Activated CD8-positive, alpha-beta memory T cell treated with anti-CD3 and anti-CD28 coated beads, Interleukin-2, amount 10 ng/mL, durations not matched to agents 7 days and 5 days (primary cell): ENCODE measurements at regions of chr5 and their contacts with region 1.

Region 1: GRCh38 chr5:139765409-139766217 is 30.0 kb upstream of the PSD2 start:
- DNase-seq: peak; percentile 85
- ATAC-seq: peak; percentile 92
- H3K4me3 Mint-ChIP-seq: peak overlapping the region; percentile 67
- H3K27ac Mint-ChIP-seq: no peak overlapping the region
- H3K4me1 Mint-ChIP-seq: peaks cover 4% of the 10 kb centered on the region
- H3K27me3 Mint-ChIP-seq: peaks cover 34% of the 10 kb centered on the region

Region 2: GRCh38 chr5:139343476-139343875 is 422.1 kb before region 1 on chr5:
- CTCF ChIA-PET with region 1: no interaction called
- DNase-seq: peak; percentile 29
- ATAC-seq: no peak
- H3K4me3 Mint-ChIP-seq: peak overlapping the region; percentile 100
- H3K27ac Mint-ChIP-seq: peak overlapping the region; percentile 99
- H3K4me1 Mint-ChIP-seq: peaks cover 46% of the 10 kb centered on the region
- H3K27me3 Mint-ChIP-seq: no peaks in the 10 kb centered on the region

Region 3: GRCh38 chr5:139633295-139634027 is 132.2 kb before region 1 on chr5:
- CTCF ChIA-PET with region 1: interaction called, 185 read pairs
- DNase-seq: peak; percentile 78
- ATAC-seq: peak; percentile 40
- H3K4me3 Mint-ChIP-seq: no peak overlapping the region
- H3K27ac Mint-ChIP-seq: peak overlapping the region; percentile 29
- H3K4me1 Mint-ChIP-seq: peaks cover 52% of the 10 kb centered on the region
- H3K27me3 Mint-ChIP-seq: no peaks in the 10 kb centered on the region

Region 4: GRCh38 chr5:139648205-139649081 is 117.2 kb before region 1 on chr5 and contains the start of gene CXXC5:
- CTCF ChIA-PET with region 1: interaction called, 11 read pairs
- DNase-seq: peak; percentile 66
- ATAC-seq: peak; percentile 59
- H3K4me3 Mint-ChIP-seq: peak within 1 kb of the TSS; percentile 57
- H3K27ac Mint-ChIP-seq: no peak within 1 kb of the TSS
- H3K4me1 Mint-ChIP-seq: peaks cover 54% of the 10 kb centered on the region
- H3K27me3 Mint-ChIP-seq: peaks cover 66% of the 10 kb centered on the region
- total RNA-seq, gene CXXC5: 1.8 to 4.1 TPM

Region 5: DNA sequence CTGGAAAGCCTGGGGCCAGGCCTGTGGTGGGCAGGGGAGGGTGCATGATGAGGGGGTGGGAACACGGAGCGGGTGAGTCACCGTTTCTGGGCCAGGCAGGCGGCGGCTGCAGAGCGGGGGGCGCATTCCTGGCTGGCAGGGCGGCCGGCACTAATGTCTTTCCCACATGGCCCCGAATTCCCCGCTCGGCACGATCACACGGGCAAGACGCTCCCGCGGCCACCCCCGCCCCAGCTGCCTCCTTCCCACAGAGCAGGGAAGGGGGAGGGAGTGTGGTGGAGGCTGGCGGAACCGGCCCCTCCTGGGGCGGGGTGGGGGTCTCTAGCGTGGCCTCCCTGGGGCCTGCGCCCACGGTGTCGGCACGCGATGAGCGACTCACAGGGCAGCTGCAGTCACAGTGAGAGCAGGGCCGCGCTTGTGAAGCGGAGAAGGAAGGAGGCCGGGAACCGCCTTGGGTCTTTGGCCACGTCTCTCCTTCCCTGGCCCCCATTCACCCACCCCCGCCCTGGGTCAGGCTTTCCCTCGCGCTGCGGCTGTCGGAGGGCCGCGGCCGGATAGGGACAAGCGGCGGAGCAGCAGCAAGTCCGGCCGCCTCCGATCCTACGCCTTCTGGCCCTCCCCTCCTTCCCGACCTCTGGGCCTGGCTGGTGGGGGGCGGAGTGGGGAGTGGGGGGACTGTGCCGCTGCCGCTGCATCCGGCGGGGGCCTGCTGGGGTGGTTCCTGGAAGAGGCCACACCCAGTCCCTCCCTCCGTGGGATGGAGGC is 68.5 kb before region 1 on chr5:
- CTCF ChIA-PET with region 1: interaction called, 14 read pairs
- DNase-seq: no peak
- ATAC-seq: peak; percentile 71
- H3K4me3 Mint-ChIP-seq: peak overlapping the region; percentile 32
- H3K27ac Mint-ChIP-seq: no peak overlapping the region
- H3K4me1 Mint-ChIP-seq: peaks cover 31% of the 10 kb centered on the region
- H3K27me3 Mint-ChIP-seq: peaks cover 28% of the 10 kb centered on the region

Region 6: DNA sequence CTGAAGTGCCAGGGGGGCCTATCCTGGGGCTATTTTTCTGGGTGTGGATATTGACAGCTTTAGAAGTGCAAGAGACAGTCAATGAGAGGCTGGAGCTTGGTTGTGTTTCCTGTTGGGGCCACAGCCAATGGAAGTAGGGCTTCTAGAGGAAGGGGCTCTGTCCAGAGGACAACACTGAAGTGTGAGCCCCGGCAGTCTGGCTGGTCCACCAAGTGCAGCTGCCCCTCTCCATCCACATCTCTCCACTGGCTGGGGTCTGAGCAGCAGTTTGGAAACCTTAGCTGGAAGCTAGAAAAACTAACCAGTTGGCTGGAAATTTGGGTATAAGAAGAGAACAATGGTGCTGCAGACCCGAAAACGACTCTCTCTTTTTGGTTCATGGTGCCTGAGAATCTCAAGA is 34.3 kb before region 1 on chr5:
- CTCF ChIA-PET with region 1: interaction called, 14 read pairs
- DNase-seq: no peak
- ATAC-seq: no peak
- H3K4me3 Mint-ChIP-seq: no peak overlapping the region
- H3K27ac Mint-ChIP-seq: no peak overlapping the region
- H3K4me1 Mint-ChIP-seq: no peaks in the 10 kb centered on the region
- H3K27me3 Mint-ChIP-seq: no peaks in the 10 kb centered on the region

Region 7: DNA sequence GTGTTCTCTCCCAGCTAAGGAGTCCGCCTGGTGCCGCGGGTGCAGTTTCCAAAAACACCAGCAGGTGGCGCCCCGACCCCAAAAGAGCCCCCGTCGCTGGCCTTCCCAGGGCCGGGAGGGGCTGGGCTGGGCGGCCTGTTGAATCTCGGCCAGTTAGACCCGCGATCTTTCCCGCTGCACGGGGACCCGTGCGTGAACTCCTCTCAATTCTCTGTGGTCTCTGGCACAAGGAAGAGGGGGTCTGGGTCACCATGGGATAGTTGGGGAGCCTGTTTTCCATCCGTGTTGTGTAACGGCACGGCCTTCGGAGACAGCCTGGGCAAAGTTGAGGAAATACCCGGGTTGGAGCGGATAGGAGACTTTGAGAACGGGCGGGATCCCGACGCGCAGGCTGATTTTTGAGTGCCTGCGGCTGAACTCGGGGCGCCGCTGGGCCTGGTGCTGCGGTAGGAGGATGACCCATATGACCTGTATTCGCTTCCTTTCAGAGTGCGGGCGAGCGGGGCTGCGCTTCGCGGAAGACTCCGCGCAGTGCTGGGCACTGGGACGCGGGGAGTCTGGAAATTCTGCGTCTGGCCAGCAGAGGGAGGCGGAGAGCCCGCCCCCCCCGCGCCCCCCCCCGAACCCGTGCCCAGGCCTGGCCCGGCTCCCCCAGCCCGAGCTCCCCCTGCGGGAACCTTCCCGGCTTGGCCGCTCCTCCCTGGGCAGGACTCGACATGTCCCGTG is 22.1 kb after region 1 on chr5:
- CTCF ChIA-PET with region 1: interaction called, 20 read pairs
- DNase-seq: peak; percentile 86
- ATAC-seq: peak; percentile 89
- H3K4me3 Mint-ChIP-seq: peak overlapping the region; percentile 71
- H3K27ac Mint-ChIP-seq: no peak overlapping the region
- H3K4me1 Mint-ChIP-seq: peaks cover 4% of the 10 kb centered on the region
- H3K27me3 Mint-ChIP-seq: peaks cover 29% of the 10 kb centered on the region

Region 8: DNA sequence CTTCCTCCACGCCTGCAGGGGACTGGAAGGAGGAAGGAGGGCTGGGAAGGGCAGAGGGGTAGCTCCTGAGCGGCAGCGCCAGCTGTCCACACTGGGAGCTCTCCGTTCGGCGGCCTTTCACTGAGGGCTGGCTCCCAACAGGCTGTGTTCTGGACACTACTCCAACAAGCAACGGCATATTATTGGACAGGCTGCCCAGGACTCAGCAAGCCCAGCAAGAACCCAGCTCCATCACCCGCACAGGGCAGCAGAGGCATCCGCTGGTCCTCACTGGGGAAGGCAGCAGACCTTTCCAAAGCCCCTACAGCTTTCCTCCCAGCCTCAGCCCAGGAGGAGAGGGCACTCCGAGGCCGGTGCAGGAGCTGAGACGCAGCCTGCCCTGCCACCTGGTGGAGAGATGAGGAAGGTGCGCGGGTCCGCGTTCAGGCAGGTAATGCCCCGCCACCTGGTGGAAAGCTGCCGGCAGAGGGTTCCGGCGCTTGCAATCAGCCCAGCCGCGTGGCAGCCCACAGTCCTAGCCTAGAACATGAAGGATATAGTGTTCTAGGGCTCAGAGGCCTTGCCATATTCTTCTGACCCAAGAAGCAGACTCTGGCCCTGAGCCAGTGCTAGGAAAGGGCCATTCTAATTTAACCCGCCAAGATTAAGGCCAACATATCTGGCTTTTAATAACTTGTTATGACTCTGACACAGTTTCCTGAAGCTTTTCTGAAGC is 203.1 kb after region 1 on chr5:
- CTCF ChIA-PET with region 1: interaction called, 10 read pairs
- DNase-seq: peak; percentile 92
- ATAC-seq: peak; percentile 100
- H3K4me3 Mint-ChIP-seq: no peak overlapping the region
- H3K27ac Mint-ChIP-seq: no peak overlapping the region
- H3K4me1 Mint-ChIP-seq: no peaks in the 10 kb centered on the region
- H3K27me3 Mint-ChIP-seq: peaks cover 26% of the 10 kb centered on the region